A549 (cell line): ENCODE measurements at regions of chr2 and their contacts with region 1.

Region 1: GRCh38 chr2:72887754-72888437 is 688 bp downstream of the SPR start:
- DNase-seq: peak; percentile 85 to 93
- ATAC-seq: peak; percentile 70 to 79
- H3K4me3 ChIP-seq: peak overlapping the region; percentile 77
- H3K27ac ChIP-seq: peak overlapping the region; percentile 92 to 96
- H3K4me1 ChIP-seq: peaks cover 22% of the 10 kb centered on the region
- CTCF ChIP-seq: peak; percentile 96
- EP300 ChIP-seq: no peak
- POLR2A ChIP-seq: peak; percentile 38; the same call in 1 of the 2 replicates
- RAD21 ChIP-seq: peak; percentile 56 to 75

Region 2: GRCh38 chr2:72770879-72771461 is 116.9 kb before region 1 on chr2:
- CTCF ChIA-PET with region 1: interaction called, 23 read pairs
- POLR2A ChIA-PET with region 1: no interaction called
- DNase-seq: peak; percentile 73 to 82
- ATAC-seq: peak; percentile 73 to 80
- H3K4me3 ChIP-seq: no peak overlapping the region
- H3K27ac ChIP-seq: no peak overlapping the region
- H3K4me1 ChIP-seq: 0 out of 3 replicates have a peak, but pooled peaks cover 4% of the 10 kb centered on the region
- CTCF ChIP-seq: peak; percentile 99
- EP300 ChIP-seq: no peak
- POLR2A ChIP-seq: no peak
- RAD21 ChIP-seq: peak; percentile 97 to 99

Region 3: DNA sequence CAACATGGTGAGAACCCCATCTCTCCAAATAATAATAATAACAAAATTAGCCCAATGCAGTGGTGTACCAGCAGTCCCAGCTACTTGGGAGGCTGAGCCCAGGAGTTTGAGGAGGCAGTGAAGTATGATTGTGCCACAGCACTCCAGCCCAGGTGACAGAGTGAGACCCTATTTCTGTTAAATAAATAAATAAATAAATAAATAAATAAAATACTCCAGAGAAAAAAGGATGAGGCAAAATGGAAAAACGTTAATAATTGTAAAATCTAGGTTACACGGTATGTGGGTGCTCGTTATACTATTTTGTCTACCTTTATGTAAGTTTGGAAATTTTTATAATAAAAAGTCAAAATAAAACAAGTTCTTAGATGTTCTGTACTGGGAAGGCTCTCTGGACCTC is 20.8 kb after region 1 on chr2:
- CTCF ChIA-PET with region 1: interaction called, 211 read pairs
- POLR2A ChIA-PET with region 1: no interaction called
- DNase-seq: no peak
- ATAC-seq: no peak
- H3K4me3 ChIP-seq: no peak overlapping the region
- H3K27ac ChIP-seq: no peak overlapping the region
- H3K4me1 ChIP-seq: 0 out of 3 replicates have a peak, but pooled peaks cover 4% of the 10 kb centered on the region
- CTCF ChIP-seq: no peak
- EP300 ChIP-seq: no peak
- POLR2A ChIP-seq: no peak
- RAD21 ChIP-seq: no peak

Region 4: GRCh38 chr2:72946466-72946865 is 58.6 kb after region 1 on chr2:
- CTCF ChIA-PET with region 1: interaction called, 11 read pairs
- POLR2A ChIA-PET with region 1: no interaction called
- DNase-seq: no peak
- ATAC-seq: no peak
- H3K4me3 ChIP-seq: no peak overlapping the region
- H3K27ac ChIP-seq: no peak overlapping the region
- H3K4me1 ChIP-seq: no peaks in the 10 kb centered on the region
- CTCF ChIP-seq: no peak
- EP300 ChIP-seq: no peak
- POLR2A ChIP-seq: no peak
- RAD21 ChIP-seq: no peak

Region 5: DNA sequence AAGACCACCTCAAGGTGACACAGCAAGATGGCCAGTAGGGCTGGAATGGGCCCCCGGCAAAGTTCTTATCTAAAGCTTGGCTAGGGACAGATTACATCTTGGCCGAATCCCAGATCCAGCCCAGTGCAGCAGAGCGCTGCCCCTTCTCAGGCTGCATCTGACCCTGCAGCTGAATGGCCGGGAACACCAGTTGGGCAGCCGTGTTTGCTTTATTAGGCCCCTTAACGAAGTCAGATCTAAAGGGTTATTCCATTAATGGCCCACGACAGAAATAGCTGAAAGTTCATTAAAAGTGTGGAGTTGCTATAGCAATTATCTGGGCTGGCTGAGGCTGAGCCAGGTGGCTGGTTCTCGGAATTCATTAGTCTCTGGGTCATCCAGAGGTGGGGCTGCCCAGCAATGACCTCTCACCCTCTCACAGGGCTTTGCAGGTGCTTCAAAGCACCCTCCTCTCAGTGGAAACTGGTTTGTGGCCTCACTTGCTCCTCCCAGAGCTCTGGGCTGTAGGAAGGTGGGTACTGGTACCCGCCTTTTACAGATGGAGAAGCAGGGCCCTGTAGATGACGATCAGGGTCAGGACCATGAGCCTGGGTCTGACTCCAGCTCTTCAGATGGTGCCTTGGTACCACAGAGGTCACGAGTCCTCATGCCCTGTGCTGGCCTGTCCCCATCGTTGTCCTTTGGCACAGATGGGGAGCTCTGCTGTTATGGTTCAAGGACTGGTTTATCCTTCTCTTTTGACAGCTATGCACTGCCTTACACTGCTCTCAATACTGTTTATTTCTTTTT is 98.2 kb after region 1 on chr2:
- CTCF ChIA-PET with region 1: interaction called, 21 read pairs
- POLR2A ChIA-PET with region 1: no interaction called
- DNase-seq: no peak
- ATAC-seq: no peak
- H3K4me3 ChIP-seq: no peak overlapping the region
- H3K27ac ChIP-seq: no peak overlapping the region
- H3K4me1 ChIP-seq: no peaks in the 10 kb centered on the region; the same call in 2 of the 3 replicates
- CTCF ChIP-seq: no peak
- EP300 ChIP-seq: no peak
- POLR2A ChIP-seq: no peak
- RAD21 ChIP-seq: no peak

Region 6: DNA sequence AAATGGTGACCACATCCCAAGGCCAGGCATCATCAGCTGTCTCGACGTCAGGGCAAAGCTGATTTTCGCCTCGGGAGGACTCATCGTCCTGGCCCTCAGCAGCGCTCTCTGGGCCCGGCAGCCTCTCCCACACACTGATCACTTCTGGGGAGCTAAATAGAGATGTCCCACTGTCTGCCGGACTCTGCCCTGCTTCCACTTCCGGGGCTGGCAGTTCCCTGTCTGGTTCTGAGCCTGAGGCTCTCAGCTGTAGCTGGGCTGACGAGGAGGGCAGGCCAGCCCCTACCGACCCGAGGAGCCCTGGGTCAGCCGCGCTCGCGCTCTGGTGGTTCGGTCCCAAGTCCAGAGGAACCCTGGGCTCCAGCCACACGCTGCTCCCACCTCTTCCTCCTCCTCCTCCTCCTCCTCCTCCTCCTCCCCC is 192.8 kb after region 1 on chr2:
- CTCF ChIA-PET with region 1: interaction called, 53 read pairs
- POLR2A ChIA-PET with region 1: no interaction called
- DNase-seq: no peak
- ATAC-seq: no peak
- H3K4me3 ChIP-seq: no peak overlapping the region
- H3K27ac ChIP-seq: no peak overlapping the region
- H3K4me1 ChIP-seq: no peaks in the 10 kb centered on the region
- CTCF ChIP-seq: no peak
- EP300 ChIP-seq: no peak
- POLR2A ChIP-seq: no peak
- RAD21 ChIP-seq: no peak

Region 7: GRCh38 chr2:73176881-73177644 is 289.2 kb after region 1 on chr2:
- CTCF ChIA-PET with region 1: interaction called, 251 read pairs
- POLR2A ChIA-PET with region 1: interaction called, 5 read pairs
- DNase-seq: peak; percentile 87 to 95
- ATAC-seq: peak; percentile 86 to 96
- H3K4me3 ChIP-seq: peak overlapping the region; percentile 50
- H3K27ac ChIP-seq: peak overlapping the region; percentile 67 to 86
- H3K4me1 ChIP-seq: peaks cover 11% of the 10 kb centered on the region
- CTCF ChIP-seq: peak; percentile 99
- EP300 ChIP-seq: no peak
- POLR2A ChIP-seq: 0 out of 2 replicates have a peak, but pooled peaks have one; percentile 18
- RAD21 ChIP-seq: peak; percentile 90 to 98